Cardiac septum (tissue), 1 donor: ENCODE measurements at regions of chr16 and their contacts with region 1.

Region 1: DNA sequence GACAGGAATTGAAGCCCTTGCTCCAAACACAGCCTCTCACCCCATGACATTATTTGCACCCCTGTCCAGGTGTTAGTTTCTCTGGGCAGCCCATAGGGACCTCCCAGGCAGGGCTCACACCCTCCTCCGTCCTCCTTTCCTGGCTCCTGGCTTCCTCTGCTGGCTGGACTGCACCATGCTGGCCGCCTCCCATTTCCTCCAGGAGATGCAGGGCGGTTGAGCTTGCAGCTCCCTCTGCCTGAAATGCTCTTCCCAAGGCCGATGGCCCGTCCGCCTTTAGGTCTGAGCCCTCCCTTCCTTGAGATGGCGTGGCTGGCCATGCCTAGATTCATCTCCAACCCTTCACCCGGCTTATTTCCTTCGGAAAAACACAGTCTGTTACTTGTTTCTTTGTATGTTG is 334.8 kb downstream of the SNX29 start:
- DNase-seq: no peak

Region 2: DNA sequence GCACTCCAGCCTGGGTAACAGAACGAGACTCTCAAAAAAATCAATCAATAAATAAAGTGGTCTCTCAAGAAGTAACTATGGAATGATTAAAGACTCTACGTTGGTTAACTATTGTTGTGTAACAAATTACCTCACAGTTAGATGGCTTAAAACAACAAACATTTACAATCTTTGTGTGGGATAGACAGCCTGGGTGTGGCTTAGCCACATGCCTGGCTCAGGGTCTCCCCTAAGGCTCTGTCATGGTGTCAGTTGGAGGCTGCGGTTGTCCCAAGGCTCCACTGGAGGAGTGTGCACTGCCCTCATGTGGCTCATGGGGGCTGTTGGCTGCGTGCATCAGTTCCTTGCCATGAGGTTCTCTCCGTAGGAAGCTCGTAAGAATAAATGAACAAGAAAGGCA is 40.3 kb before region 1 on chr16:
- intact Hi-C with region 1: no loop called
- DNase-seq: no peak

Region 3: DNA sequence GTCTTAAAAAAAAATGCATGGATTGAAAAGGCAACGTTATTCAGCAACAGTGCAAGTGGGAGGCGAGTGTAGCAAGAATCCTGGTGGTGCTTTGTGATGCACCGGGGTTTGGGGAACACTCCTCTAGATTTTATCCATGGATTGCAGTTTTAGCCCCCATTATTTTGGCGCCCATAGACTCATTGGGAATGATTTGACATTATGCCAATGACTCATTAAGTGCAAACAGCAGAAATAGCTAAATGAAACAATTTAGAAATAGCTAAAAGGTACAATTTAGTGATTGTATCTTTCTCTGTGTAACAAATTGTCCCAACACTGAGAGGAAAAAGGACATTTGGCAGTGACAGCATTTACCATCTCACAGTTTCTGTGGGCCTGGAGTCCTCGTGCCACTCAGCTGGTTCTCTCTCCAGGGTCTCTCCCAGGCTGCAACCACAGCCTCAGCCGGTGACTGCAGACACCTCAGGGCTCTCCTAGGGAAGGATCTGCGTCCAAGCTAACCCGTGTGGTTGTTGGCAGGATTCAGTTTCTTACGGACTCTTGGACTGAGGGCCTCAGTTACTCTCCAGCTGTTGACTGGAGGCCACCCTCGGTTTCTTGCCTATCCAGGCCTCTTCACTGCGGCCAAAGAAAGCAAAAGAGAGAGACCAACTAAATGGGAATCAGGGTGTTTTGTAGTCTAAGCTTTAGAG is 63.9 kb after region 1 on chr16:
- intact Hi-C with region 1: loop called (anchors 10 kb)
- DNase-seq: no peak